ENCODE measurements at regions of chr1 and their contacts with region 1.

Region 1: DNA sequence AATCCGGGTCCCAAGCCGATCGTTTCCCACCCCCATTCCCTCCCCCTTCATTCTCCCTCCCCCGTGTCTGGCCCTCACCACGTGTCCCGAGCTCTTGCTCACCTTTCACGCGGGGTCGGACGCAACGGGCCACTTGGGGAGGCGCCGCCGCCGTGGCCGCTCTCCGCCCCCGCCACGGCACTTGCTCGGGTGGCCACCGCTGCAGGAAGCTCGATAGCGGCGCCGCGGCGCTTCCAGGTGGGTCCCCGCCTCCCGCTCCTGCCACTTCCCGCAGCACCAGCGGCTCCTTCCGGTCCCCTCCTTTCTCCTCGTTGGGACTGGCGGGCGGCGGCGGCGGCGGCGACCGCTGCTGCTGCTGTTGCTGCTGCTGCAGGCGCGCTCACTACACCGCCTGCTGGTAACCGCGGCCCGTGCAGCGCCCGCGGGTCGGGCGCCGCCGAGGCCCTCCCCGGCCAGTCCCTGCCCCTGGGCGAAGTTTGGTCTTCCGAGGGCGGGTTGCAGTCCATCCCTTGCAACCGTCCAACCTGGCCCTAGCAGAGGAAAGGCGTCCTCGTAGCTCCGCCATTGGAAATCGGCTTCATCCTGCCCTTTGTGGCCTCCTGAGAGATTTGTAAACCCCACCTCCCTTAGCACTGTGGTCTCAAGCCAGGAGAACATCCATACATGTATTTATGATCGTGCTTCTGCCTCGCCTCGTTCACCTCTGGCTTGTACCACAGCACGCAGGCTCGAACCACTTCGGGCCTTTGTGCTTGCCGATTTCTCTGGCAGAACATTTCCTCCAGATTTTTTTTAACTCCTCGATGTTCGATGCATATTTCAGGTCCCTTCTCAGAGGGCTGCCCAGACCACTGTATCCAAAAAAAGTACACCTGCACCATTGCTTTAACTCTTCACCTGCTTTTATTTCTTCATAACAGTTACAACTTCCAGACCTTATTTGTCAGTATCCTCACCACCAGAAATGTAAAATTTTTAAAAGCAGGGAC is 996 bp upstream of the ZZZ3 start:
- DNase-seq: peak; percentile 91 to 94 (median 92)
- H3K4me3 ChIP-seq: peak overlapping the region; percentile 17 to 81
- H3K4me3 Mint-ChIP-seq: peak overlapping the region; percentile 85 to 95 (median 91)
- H3K27ac ChIP-seq: peak overlapping the region; percentile 88
- H3K27ac Mint-ChIP-seq: peak overlapping the region; percentile 93 to 98 (median 97)
- H3K4me1 ChIP-seq: peaks cover 45% of the 10 kb centered on the region
- H3K4me1 Mint-ChIP-seq: peaks cover 20 to 42% (median 31%) of the 10 kb centered on the region in 4 donors
- H3K27me3 ChIP-seq: no peaks in the 10 kb centered on the region
- H3K27me3 Mint-ChIP-seq: no peaks in the 10 kb centered on the region

Region 2: GRCh38 chr1:76154206-76154956 is 1529.1 kb before region 1 on chr1:
- CTCF ChIA-PET with region 1: no interaction called
- POLR2A ChIA-PET with region 1: no interaction called
- intact Hi-C with region 1: loop called (anchors 1 kb)
- DNase-seq: peak; percentile 67 to 78 (median 77)
- H3K4me3 ChIP-seq: peak overlapping the region; percentile 24 to 60
- H3K4me3 Mint-ChIP-seq: peak overlapping the region; percentile 89 to 96 (median 92)
- H3K27ac ChIP-seq: peak overlapping the region; percentile 40
- H3K27ac Mint-ChIP-seq: peak overlapping the region; percentile 69 to 97 (median 91)
- H3K4me1 ChIP-seq: peaks cover 7% of the 10 kb centered on the region
- H3K4me1 Mint-ChIP-seq: peaks cover 5 to 13% (median 7%) of the 10 kb centered on the region in 4 donors
- H3K27me3 ChIP-seq: no peaks in the 10 kb centered on the region
- H3K27me3 Mint-ChIP-seq: peaks cover 2 to 5% of the 10 kb centered on the region in 2 donors

Region 3: GRCh38 chr1:77281491-77282186 is 401.8 kb before region 1 on chr1 and contains the start of gene AK5:
- CTCF ChIA-PET with region 1: no interaction called
- POLR2A ChIA-PET with region 1: interaction called, 4 read pairs
- intact Hi-C with region 1: loop called (anchors 10 kb)
- DNase-seq: peak in 4 of 5 donors; percentile 36 to 39 (median 39)
- H3K4me3 ChIP-seq: peak within 1 kb of the TSS in 1 of 2 donors; percentile 54
- H3K4me3 Mint-ChIP-seq: peak within 1 kb of the TSS; percentile 78 to 91 (median 84)
- H3K27ac ChIP-seq: no peak within 1 kb of the TSS
- H3K27ac Mint-ChIP-seq: peak within 1 kb of the TSS in 2 of 7 donors; percentile 24 to 72
- H3K4me1 ChIP-seq: peaks cover 30% of the 10 kb centered on the region
- H3K4me1 Mint-ChIP-seq: peaks cover 21 to 33% (median 27%) of the 10 kb centered on the region in 4 donors
- H3K27me3 ChIP-seq: no peaks in the 10 kb centered on the region
- H3K27me3 Mint-ChIP-seq: peaks cover 9% of the 10 kb centered on the region in 2 donors
- total RNA-seq, gene AK5: 17.0 to 25.5 TPM

Region 4: GRCh38 chr1:77582905-77583304 is 100.5 kb before region 1 on chr1:
- CTCF ChIA-PET with region 1: no interaction called
- POLR2A ChIA-PET with region 1: no interaction called
- intact Hi-C with region 1: loop called (anchors 5 kb)
- DNase-seq: no peak
- H3K4me3 ChIP-seq: no peak overlapping the region
- H3K4me3 Mint-ChIP-seq: no peak overlapping the region
- H3K27ac ChIP-seq: no peak overlapping the region
- H3K27ac Mint-ChIP-seq: peak overlapping the region in 2 of 7 donors; percentile 2 to 25
- H3K4me1 ChIP-seq: no peaks in the 10 kb centered on the region
- H3K4me1 Mint-ChIP-seq: peaks cover 9 to 17% (median 11%) of the 10 kb centered on the region in 4 donors
- H3K27me3 ChIP-seq: no peaks in the 10 kb centered on the region
- H3K27me3 Mint-ChIP-seq: no peaks in the 10 kb centered on the region

Region 5: GRCh38 chr1:77655431-77655974 is 28.0 kb before region 1 on chr1:
- CTCF ChIA-PET with region 1: no interaction called
- POLR2A ChIA-PET with region 1: no interaction called
- intact Hi-C with region 1: no loop called
- DNase-seq: no peak
- H3K4me3 ChIP-seq: no peak overlapping the region
- H3K4me3 Mint-ChIP-seq: no peak overlapping the region
- H3K27ac ChIP-seq: no peak overlapping the region
- H3K27ac Mint-ChIP-seq: peak overlapping the region in 4 of 7 donors; percentile 18 to 74 (median 44)
- H3K4me1 ChIP-seq: peaks cover 17% of the 10 kb centered on the region
- H3K4me1 Mint-ChIP-seq: peaks cover 27 to 50% (median 38%) of the 10 kb centered on the region in 4 donors
- H3K27me3 ChIP-seq: no peaks in the 10 kb centered on the region
- H3K27me3 Mint-ChIP-seq: no peaks in the 10 kb centered on the region

Region 6: GRCh38 chr1:77732090-77732489 is 48.6 kb after region 1 on chr1:
- CTCF ChIA-PET with region 1: no interaction called
- POLR2A ChIA-PET with region 1: no interaction called
- intact Hi-C with region 1: no loop called
- DNase-seq: no peak
- H3K4me3 ChIP-seq: no peak overlapping the region
- H3K4me3 Mint-ChIP-seq: no peak overlapping the region
- H3K27ac ChIP-seq: no peak overlapping the region
- H3K27ac Mint-ChIP-seq: peak overlapping the region in 2 of 7 donors; percentile 33 to 44
- H3K4me1 ChIP-seq: no peaks in the 10 kb centered on the region
- H3K4me1 Mint-ChIP-seq: peaks cover 0 to 5% (median 3%) of the 10 kb centered on the region in 4 donors
- H3K27me3 ChIP-seq: no peaks in the 10 kb centered on the region
- H3K27me3 Mint-ChIP-seq: no peaks in the 10 kb centered on the region

Region 7: DNA sequence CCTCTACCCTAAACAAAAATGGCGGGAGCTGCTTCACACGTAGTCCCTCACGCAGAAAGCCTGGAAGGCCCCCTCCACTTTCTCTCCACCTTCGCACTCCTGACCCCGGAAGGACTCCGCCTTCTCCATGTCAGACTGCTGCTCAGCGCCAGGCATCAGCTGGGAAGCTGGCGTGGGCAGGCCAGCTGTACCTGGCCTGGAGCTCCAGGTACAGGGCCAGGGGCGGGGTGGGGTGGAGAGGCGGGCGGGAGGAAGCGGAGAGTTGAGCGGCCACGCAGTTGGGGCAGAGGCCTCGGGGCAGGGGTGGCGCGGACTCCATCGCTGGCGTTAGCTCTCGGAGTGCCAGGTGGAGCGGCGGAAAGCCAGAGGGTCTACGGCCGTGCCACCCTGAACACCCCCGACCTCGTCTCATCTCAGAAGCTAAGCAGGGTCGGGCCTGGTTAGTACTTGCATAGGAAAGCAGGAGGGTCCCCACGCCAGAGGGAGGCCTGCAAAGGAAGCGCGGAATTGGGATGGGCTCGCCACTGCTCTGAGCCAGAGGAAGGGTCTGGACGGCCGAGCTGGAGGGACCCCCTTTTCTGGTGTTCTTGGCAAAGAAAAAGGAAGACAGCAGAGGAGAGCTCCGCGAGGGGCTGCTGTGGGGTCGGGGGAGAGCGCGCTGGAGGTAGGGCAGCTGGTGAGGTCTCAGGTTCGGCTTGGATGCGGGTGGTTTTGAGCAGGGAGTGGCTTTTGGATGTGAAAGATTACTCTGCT is 96.3 kb after region 1 on chr1 and contains the start of gene MIGA1:
- CTCF ChIA-PET with region 1: interaction called, 3 read pairs
- POLR2A ChIA-PET with region 1: interaction called, 31 read pairs
- intact Hi-C with region 1: no loop called
- DNase-seq: peak; percentile 86 to 93 (median 87)
- H3K4me3 ChIP-seq: peak within 1 kb of the TSS; percentile 83 to 96
- H3K4me3 Mint-ChIP-seq: peak within 1 kb of the TSS; percentile 85 to 96 (median 94)
- H3K27ac ChIP-seq: peak within 1 kb of the TSS; percentile 68
- H3K27ac Mint-ChIP-seq: peak within 1 kb of the TSS; percentile 91 to 96 (median 93)
- H3K4me1 ChIP-seq: peaks cover 36% of the 10 kb centered on the region
- H3K4me1 Mint-ChIP-seq: peaks cover 28 to 42% (median 34%) of the 10 kb centered on the region in 4 donors
- H3K27me3 ChIP-seq: no peaks in the 10 kb centered on the region
- H3K27me3 Mint-ChIP-seq: no peaks in the 10 kb centered on the region
- total RNA-seq, gene MIGA1: 21.7 TPM

Region 8: DNA sequence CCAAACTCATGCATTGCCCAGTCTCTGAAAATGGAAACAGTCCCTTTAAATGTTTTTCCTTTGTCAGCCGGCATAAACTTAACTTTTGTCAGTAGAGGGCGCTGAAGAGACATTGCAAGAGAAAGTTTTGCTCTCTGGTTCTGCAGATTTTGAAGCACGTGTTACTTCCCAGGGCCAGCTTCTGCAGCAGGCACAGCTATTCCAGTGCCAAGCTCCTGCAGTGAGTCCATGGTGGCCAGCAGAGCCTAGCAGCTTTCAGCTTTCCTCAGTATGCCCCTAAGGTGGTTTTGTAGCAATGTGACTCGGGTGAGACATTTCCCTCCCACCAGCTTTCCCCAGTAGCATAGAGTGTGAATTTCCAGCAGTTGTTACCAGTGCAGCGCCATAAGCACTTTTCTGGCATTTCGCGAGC is 934.2 kb after region 1 on chr1:
- CTCF ChIA-PET with region 1: no interaction called
- POLR2A ChIA-PET with region 1: no interaction called
- intact Hi-C with region 1: loop called (anchors 10 kb)
- DNase-seq: peak; percentile 73 to 80 (median 78)
- H3K4me3 ChIP-seq: no peak overlapping the region
- H3K4me3 Mint-ChIP-seq: peak overlapping the region in 6 of 8 donors; percentile 27 to 74 (median 40)
- H3K27ac ChIP-seq: no peak overlapping the region
- H3K27ac Mint-ChIP-seq: peak overlapping the region in 6 of 7 donors; percentile 24 to 88 (median 70)
- H3K4me1 ChIP-seq: peaks cover 43% of the 10 kb centered on the region
- H3K4me1 Mint-ChIP-seq: peaks cover 33 to 45% (median 39%) of the 10 kb centered on the region in 4 donors
- H3K27me3 ChIP-seq: no peaks in the 10 kb centered on the region
- H3K27me3 Mint-ChIP-seq: no peaks in the 10 kb centered on the region

Measured in CD4-positive, alpha-beta memory T cell (primary cell).